ENCODE measurements at regions of chr19 and their contacts with region 1.

Region 1: GRCh38 chr19:35911173-35911572 is 3.1 kb upstream of the TYROBP start:
- DNase-seq: no peak
- ATAC-seq: no peak
- H3K4me3 ChIP-seq: no peak overlapping the region
- H3K27ac ChIP-seq: no peak overlapping the region
- H3K4me1 ChIP-seq: peaks cover 10% of the 10 kb centered on the region
- H3K27me3 ChIP-seq: no peaks in the 10 kb centered on the region
- CTCF ChIP-seq: no peak
- POLR2A ChIP-seq: no peak
- RAD21 ChIP-seq: no peak

Region 2: DNA sequence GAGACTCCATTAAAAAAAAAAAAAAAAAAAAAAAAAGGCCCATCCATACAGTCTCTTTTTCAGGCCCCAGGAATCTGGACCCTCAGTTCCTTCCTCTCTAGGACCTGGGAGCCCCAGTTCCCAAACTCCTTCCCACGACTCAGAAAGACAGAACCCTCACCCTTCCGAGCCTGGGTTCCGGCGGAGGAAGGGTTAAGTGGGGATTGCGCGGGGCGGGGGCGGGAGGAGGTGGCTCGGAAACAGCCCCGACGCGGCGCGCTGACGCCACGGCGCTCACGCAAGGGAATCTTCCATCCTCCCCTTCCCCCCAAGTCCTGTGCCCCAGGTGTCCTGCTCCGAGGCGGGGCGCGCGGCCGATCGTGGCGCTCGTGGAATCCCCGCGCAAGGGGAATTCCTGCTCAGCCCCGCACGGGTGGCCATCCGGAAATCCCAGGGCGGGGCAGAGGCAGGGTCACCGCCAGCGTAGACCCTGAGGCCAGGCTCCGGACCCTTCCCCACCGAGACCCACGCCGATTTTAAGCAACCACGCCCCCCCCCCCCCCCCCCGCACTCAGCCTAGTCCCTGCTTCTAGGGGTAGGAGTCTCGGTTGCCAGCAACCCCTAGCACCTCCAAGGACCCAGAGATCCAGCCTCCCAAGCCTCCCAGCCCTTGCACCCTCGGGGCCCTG is 11.5 kb before region 1 on chr19:
- CTCF ChIA-PET with region 1: no interaction called
- POLR2A ChIA-PET with region 1: interaction called, 11 read pairs
- dilution Hi-C with region 1: no loop called
- in situ Hi-C with region 1: no loop called
- intact Hi-C with region 1: no loop called
- DNase-seq: peak; percentile 81
- ATAC-seq: peak; percentile 71
- H3K4me3 ChIP-seq: peak overlapping the region; percentile 79
- H3K27ac ChIP-seq: peak overlapping the region; percentile 82
- H3K4me1 ChIP-seq: peaks cover 28% of the 10 kb centered on the region
- H3K27me3 ChIP-seq: no peaks in the 10 kb centered on the region
- CTCF ChIP-seq: no peak
- POLR2A ChIP-seq: no peak
- RAD21 ChIP-seq: 0 out of 2 replicates have a peak, but pooled peaks have one; percentile 0

Region 3: GRCh38 chr19:36032251-36033104 is 121.3 kb after region 1 on chr19 and contains the start of gene CLIP3:
- CTCF ChIA-PET with region 1: no interaction called
- POLR2A ChIA-PET with region 1: no interaction called
- dilution Hi-C with region 1: no loop called
- in situ Hi-C with region 1: no loop called
- intact Hi-C with region 1: no loop called
- DNase-seq: peak; percentile 62
- ATAC-seq: peak; percentile 96
- H3K4me3 ChIP-seq: peak within 1 kb of the TSS; percentile 99
- H3K27ac ChIP-seq: peak within 1 kb of the TSS; percentile 96
- H3K4me1 ChIP-seq: peaks cover 5% of the 10 kb centered on the region; the same call in 1 of the 2 replicates
- H3K27me3 ChIP-seq: no peaks in the 10 kb centered on the region
- CTCF ChIP-seq: no peak
- POLR2A ChIP-seq: no peak
- RAD21 ChIP-seq: no peak
- total RNA-seq, gene CLIP3: 5.0 and 5.4 TPM in 2 replicates

Measured in IMR-90 (cell line).